CD8-positive, alpha-beta memory T cell (primary cell): ENCODE measurements at regions of chr1 and their contacts with region 1.

Region 1: GRCh38 chr1:160755911-160756848 is 17.1 kb downstream of the SLAMF7 start:
- DNase-seq: peak in 4 of 5 donors; percentile 28 to 76 (median 54)
- H3K4me3 ChIP-seq: no peak overlapping the region
- H3K4me3 Mint-ChIP-seq: peak overlapping the region; percentile 29 to 86 (median 71)
- H3K27ac ChIP-seq: peak overlapping the region; percentile 33
- H3K27ac Mint-ChIP-seq: peak overlapping the region; percentile 88 to 98 (median 95)
- H3K4me1 ChIP-seq: peaks cover 51% of the 10 kb centered on the region
- H3K4me1 Mint-ChIP-seq: peaks cover 71 to 87% (median 81%) of the 10 kb centered on the region in 3 donors
- H3K27me3 ChIP-seq: no peaks in the 10 kb centered on the region
- H3K27me3 Mint-ChIP-seq: peaks cover 0 to 4% of the 10 kb centered on the region in 2 donors

Region 2: GRCh38 chr1:160739098-160739511 is 17.1 kb before region 1 on chr1 and contains the start of gene SLAMF7:
- CTCF ChIA-PET with region 1: interaction called, 38 read pairs
- POLR2A ChIA-PET with region 1: interaction called, 18 read pairs
- DNase-seq: peak in 4 of 5 donors; percentile 31 to 75 (median 46)
- H3K4me3 ChIP-seq: peak within 1 kb of the TSS; percentile 63
- H3K4me3 Mint-ChIP-seq: peak within 1 kb of the TSS; percentile 89 to 98 (median 94)
- H3K27ac ChIP-seq: peak within 1 kb of the TSS; percentile 54
- H3K27ac Mint-ChIP-seq: peak within 1 kb of the TSS; percentile 88 to 98 (median 94)
- H3K4me1 ChIP-seq: peaks cover 37% of the 10 kb centered on the region
- H3K4me1 Mint-ChIP-seq: peaks cover 69 to 73% (median 69%) of the 10 kb centered on the region in 3 donors
- H3K27me3 ChIP-seq: no peaks in the 10 kb centered on the region
- H3K27me3 Mint-ChIP-seq: no peaks in the 10 kb centered on the region
- total RNA-seq, gene SLAMF7: 79.5 to 97.4 TPM

Region 3: GRCh38 chr1:160789702-160790611 is 33.8 kb after region 1 on chr1:
- CTCF ChIA-PET with region 1: no interaction called
- POLR2A ChIA-PET with region 1: no interaction called
- DNase-seq: no peak
- H3K4me3 ChIP-seq: no peak overlapping the region
- H3K4me3 Mint-ChIP-seq: no peak overlapping the region
- H3K27ac ChIP-seq: no peak overlapping the region
- H3K27ac Mint-ChIP-seq: peak overlapping the region in 1 of 8 donors; percentile 50
- H3K4me1 ChIP-seq: peaks cover 4% of the 10 kb centered on the region
- H3K4me1 Mint-ChIP-seq: peaks cover 3 to 10% (median 10%) of the 10 kb centered on the region in 3 donors
- H3K27me3 ChIP-seq: no peaks in the 10 kb centered on the region
- H3K27me3 Mint-ChIP-seq: no peaks in the 10 kb centered on the region

Region 4: GRCh38 chr1:160813215-160813614 is 57.0 kb after region 1 on chr1:
- CTCF ChIA-PET with region 1: no interaction called
- POLR2A ChIA-PET with region 1: no interaction called
- DNase-seq: no peak
- H3K4me3 ChIP-seq: no peak overlapping the region
- H3K4me3 Mint-ChIP-seq: peak overlapping the region in 2 of 7 donors; percentile 11 to 67
- H3K27ac ChIP-seq: no peak overlapping the region
- H3K27ac Mint-ChIP-seq: peak overlapping the region; percentile 13 to 97 (median 84)
- H3K4me1 ChIP-seq: peaks cover 15% of the 10 kb centered on the region
- H3K4me1 Mint-ChIP-seq: peaks cover 49 to 61% (median 57%) of the 10 kb centered on the region in 3 donors
- H3K27me3 ChIP-seq: no peaks in the 10 kb centered on the region
- H3K27me3 Mint-ChIP-seq: no peaks in the 10 kb centered on the region

Region 5: GRCh38 chr1:160846281-160846680 is 90.1 kb after region 1 on chr1:
- CTCF ChIA-PET with region 1: no interaction called
- POLR2A ChIA-PET with region 1: no interaction called
- DNase-seq: no peak
- H3K4me3 ChIP-seq: no peak overlapping the region
- H3K4me3 Mint-ChIP-seq: no peak overlapping the region
- H3K27ac ChIP-seq: no peak overlapping the region
- H3K27ac Mint-ChIP-seq: peak overlapping the region in 1 of 8 donors; percentile 22
- H3K4me1 ChIP-seq: peaks cover 17% of the 10 kb centered on the region
- H3K4me1 Mint-ChIP-seq: peaks cover 53 to 82% (median 82%) of the 10 kb centered on the region in 3 donors
- H3K27me3 ChIP-seq: no peaks in the 10 kb centered on the region
- H3K27me3 Mint-ChIP-seq: no peaks in the 10 kb centered on the region

Region 6: GRCh38 chr1:160925652-160926241 is 169.6 kb after region 1 on chr1:
- CTCF ChIA-PET with region 1: no interaction called
- POLR2A ChIA-PET with region 1: no interaction called
- DNase-seq: no peak
- H3K4me3 ChIP-seq: no peak overlapping the region
- H3K4me3 Mint-ChIP-seq: no peak overlapping the region
- H3K27ac ChIP-seq: no peak overlapping the region
- H3K27ac Mint-ChIP-seq: no peak overlapping the region
- H3K4me1 ChIP-seq: no peaks in the 10 kb centered on the region
- H3K4me1 Mint-ChIP-seq: peaks cover 0 to 4% (median 0%) of the 10 kb centered on the region in 3 donors
- H3K27me3 ChIP-seq: no peaks in the 10 kb centered on the region
- H3K27me3 Mint-ChIP-seq: peaks cover 3 to 4% of the 10 kb centered on the region in 2 donors